Left ventricle myocardium inferior (tissue), 1 donor: ENCODE measurements at regions of chr9 and their contacts with region 1.

Region 1: GRCh38 chr9:137227063-137227852 is at the start of gene RNF224:
- DNase-seq: peak; percentile 71
- H3K4me3 ChIP-seq: no peak within 1 kb of the TSS
- H3K27ac ChIP-seq: no peak within 1 kb of the TSS
- H3K4me1 ChIP-seq: peaks cover 23% of the 10 kb centered on the region
- H3K27me3 ChIP-seq: peaks cover 44% of the 10 kb centered on the region
- CTCF ChIP-seq: peak; percentile 92
- total RNA-seq, gene RNF224: not detected

Region 2: GRCh38 chr9:137123468-137123837 is 103.8 kb before region 1 on chr9:
- intact Hi-C with region 1: loop called (anchors 5 kb)
- DNase-seq: no peak
- H3K4me3 ChIP-seq: no peak overlapping the region
- H3K27ac ChIP-seq: no peak overlapping the region
- H3K4me1 ChIP-seq: peaks cover 26% of the 10 kb centered on the region
- H3K27me3 ChIP-seq: no peaks in the 10 kb centered on the region
- CTCF ChIP-seq: no peak